Aorta (tissue), 5 donors: ENCODE measurements at regions of chr19 and their contacts with region 1.

Region 1: DNA sequence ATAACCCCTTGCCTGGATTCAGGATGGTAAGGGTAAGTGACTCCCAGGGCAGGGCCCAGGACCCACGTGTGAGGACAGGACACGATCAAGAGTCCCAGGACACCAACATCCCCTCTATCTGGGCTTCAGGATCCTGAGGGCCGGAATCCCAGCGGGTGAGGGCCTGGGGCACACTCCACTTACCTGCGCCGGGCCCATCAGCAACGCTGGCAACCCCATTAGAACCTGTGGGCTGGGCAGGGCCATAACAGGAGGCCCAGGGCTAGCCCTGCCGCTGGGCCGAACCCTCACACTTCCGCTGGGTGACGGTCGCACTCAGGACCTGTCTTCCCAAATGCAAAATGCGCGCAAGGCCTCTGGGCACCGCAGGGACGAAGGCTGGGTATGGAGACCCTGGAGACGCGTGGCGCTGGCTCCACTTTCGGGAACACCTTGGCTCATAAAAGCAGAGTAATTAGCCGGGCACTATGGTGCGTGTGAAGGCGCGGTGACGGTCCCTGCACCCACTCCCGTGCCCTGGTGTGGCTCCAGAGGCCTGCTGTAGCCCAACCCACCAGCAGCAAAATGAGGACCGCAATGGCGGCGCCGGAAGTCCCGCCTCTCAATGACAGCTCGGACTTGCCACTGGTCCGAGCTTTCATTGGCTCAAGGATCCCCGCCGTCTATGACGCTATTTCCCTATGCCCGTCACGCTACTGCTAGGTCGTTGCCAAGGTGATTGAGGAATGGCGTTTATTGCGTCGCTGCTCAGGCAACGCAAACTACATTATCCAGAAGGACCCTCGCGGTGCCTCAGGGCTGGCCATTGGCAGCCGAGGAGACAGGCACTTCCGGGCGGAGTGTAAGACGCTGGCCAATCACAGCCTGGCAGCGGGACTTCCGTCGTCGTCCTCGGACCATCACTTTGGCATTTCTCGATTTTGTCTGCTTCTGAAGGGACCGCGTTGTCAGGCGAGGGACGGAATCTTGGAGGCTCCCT is at the start of gene ZNF132:
- DNase-seq: peak; percentile 98
- ATAC-seq: peak; percentile 98
- H3K4me3 ChIP-seq: peak within 1 kb of the TSS; percentile 39 to 50
- H3K27ac ChIP-seq: peak within 1 kb of the TSS in 1 of 2 donors; percentile 68
- H3K4me1 ChIP-seq: no peaks in the 10 kb centered on the region
- H3K27me3 ChIP-seq: no peaks in the 10 kb centered on the region
- total RNA-seq, gene ZNF132: 4.5 to 5.4 TPM

Region 2: DNA sequence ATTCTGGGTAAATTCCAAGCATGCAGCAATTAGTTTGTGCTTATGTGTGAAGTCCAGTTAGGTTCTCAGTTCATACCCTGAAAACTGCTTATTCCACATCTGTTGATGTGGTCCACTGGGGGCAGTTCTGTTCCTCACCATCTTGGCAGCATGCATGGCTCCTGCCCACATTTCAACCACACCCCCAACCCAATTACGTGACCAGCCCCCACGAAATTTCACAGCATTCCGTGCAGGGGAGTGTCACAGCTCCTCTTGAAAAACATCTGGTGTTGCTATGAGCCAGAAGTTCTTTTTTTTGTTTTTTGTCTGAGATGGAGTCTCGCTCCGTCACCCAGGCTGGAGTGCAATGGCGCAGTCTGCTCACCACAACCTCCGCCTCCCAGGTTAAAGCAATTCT is 143.8 kb before region 1 on chr19:
- intact Hi-C with region 1: no loop called
- DNase-seq: no peak
- ATAC-seq: no peak
- H3K4me3 ChIP-seq: no peak overlapping the region
- H3K27ac ChIP-seq: no peak overlapping the region
- H3K4me1 ChIP-seq: no peaks in the 10 kb centered on the region
- H3K27me3 ChIP-seq: no peaks in the 10 kb centered on the region

Region 3: GRCh38 chr19:58400916-58401839 is 38.7 kb before region 1 on chr19:
- intact Hi-C with region 1: loop called in 1 of 2 experiments (anchors 5 kb)
- DNase-seq: peak; percentile 100
- ATAC-seq: peak; percentile 100
- H3K4me3 ChIP-seq: peak overlapping the region in 1 of 2 donors; percentile 57
- H3K27ac ChIP-seq: no peak overlapping the region
- H3K4me1 ChIP-seq: no peaks in the 10 kb centered on the region
- H3K27me3 ChIP-seq: no peaks in the 10 kb centered on the region

Region 4: DNA sequence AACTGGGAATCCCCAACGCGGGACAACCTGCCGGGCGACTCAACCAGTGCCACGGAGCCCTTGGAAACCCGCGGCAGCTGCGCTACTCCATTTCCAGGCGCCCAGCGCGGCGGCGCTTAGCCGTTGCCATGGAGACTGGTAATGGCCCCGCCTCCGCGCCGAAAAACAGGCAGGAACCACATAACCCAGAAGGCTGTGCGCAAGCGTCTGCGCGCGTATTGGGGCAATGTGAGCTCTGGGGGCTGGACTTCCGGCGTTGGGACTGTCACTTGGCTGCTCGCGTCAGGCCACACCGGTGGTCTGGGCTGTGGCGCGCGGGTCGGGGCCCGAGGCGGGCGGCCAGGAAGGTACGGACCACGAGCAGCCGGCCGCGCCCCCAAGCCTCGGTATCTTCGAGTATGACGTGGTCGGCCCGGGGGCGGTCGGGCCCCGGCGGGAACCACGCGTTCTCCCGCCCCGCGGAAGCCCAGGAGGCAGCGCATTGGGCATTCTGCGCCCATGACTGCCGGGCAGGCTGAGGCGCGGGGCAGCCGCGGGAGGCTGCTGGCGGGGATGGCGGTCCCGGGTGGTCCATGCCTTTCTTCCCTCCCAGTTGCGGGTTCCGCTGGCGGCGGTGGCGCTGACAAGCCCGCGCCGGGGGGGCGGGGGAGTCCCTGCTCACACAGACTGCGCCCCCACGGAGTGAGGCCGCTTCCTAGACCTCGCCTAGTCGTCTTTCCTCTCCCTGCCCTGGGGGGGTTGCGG is 11.7 kb after region 1 on chr19 and contains the start of gene ZNF324B:
- intact Hi-C with region 1: loop called in 1 of 2 experiments (anchors 1 kb)
- DNase-seq: peak; percentile 98 to 99
- ATAC-seq: peak; percentile 98
- H3K4me3 ChIP-seq: peak within 1 kb of the TSS; percentile 63 to 66
- H3K27ac ChIP-seq: peak within 1 kb of the TSS in 1 of 2 donors; percentile 2
- H3K4me1 ChIP-seq: no peaks in the 10 kb centered on the region
- H3K27me3 ChIP-seq: no peaks in the 10 kb centered on the region
- total RNA-seq, gene ZNF324B: 4.6 to 5.7 TPM

Region 5: GRCh38 chr19:58572818-58573657 is 133.2 kb after region 1 on chr19 and contains the start of gene MZF1:
- intact Hi-C with region 1: no loop called
- DNase-seq: peak; percentile 100
- ATAC-seq: peak; percentile 92
- H3K4me3 ChIP-seq: peak within 1 kb of the TSS; percentile 13 to 28
- H3K27ac ChIP-seq: peak within 1 kb of the TSS in 1 of 2 donors; percentile 81
- H3K4me1 ChIP-seq: no peaks in the 10 kb centered on the region
- H3K27me3 ChIP-seq: no peaks in the 10 kb centered on the region
- total RNA-seq, gene MZF1: 17.7 to 31.9 TPM